ENCODE measurements at regions of chr18 and their contacts with region 1.

Region 1: DNA sequence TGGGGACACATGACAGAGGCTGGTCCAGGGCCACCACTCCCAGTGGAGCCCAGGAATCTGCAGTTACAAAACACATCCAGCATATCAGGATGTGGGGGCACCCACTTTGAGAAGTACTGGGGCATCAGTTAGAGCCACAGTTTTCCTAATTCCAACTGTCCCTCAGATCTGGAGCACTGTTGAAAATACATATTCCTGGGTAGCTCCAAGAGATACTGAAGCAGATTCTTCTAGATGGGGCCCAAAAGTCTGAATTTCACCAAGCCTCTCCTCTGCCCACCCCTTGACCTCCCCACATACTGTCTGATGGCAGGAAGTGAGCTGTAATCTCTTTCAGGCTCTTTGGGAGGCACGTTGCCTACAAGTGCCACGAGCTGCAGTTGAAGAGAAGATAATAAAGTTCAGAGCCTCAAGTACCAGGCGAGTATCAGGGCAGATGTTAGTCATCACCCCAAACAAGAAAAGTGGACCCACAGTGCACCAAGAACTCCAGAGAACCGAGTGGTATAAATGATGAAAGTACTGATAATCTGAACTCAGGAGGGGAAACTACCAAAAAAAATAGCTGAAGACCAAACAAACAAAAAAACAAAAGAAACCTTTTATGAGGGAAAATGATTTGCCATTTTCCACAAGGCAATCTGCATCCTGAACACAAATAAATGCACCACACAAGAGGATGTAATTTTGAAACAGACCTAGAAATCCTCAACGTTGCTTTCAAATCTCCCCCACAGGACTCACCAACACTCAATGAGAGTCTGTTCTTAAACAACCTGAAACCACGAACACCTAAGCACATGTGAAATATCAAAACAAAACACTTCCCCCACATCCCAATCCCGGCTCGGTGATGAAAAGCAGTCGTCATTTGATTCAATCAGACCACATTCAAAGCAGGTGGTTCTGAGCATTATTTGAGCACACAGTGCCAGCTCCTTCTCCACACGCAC is 98.7 kb downstream of the TCF4 start:
- DNase-seq: peak; percentile 56
- H3K4me3 Mint-ChIP-seq: no peak overlapping the region
- H3K27ac Mint-ChIP-seq: no peak overlapping the region
- H3K4me1 Mint-ChIP-seq: peaks cover 15% of the 10 kb centered on the region
- H3K27me3 Mint-ChIP-seq: peaks cover 39% of the 10 kb centered on the region

Region 2: GRCh38 chr18:55477499-55477859 is 11.8 kb before region 1 on chr18:
- CTCF ChIA-PET with region 1: no interaction called
- intact Hi-C with region 1: loop called (anchors 1 kb)
- DNase-seq: peak; percentile 16
- H3K4me3 Mint-ChIP-seq: peak overlapping the region; percentile 76
- H3K27ac Mint-ChIP-seq: no peak overlapping the region
- H3K4me1 Mint-ChIP-seq: peaks cover 13% of the 10 kb centered on the region
- H3K27me3 Mint-ChIP-seq: no peaks in the 10 kb centered on the region

Region 3: GRCh38 chr18:55589625-55590291 is 100.4 kb after region 1 on chr18:
- CTCF ChIA-PET with region 1: no interaction called
- intact Hi-C with region 1: loop called (anchors 1 kb)
- DNase-seq: peak; percentile 86
- H3K4me3 Mint-ChIP-seq: peak overlapping the region; percentile 70
- H3K27ac Mint-ChIP-seq: no peak overlapping the region
- H3K4me1 Mint-ChIP-seq: peaks cover 19% of the 10 kb centered on the region
- H3K27me3 Mint-ChIP-seq: peaks cover 59% of the 10 kb centered on the region